GM12878 (cell line): ENCODE measurements at regions of chr12 and their contacts with region 1.

Region 1: DNA sequence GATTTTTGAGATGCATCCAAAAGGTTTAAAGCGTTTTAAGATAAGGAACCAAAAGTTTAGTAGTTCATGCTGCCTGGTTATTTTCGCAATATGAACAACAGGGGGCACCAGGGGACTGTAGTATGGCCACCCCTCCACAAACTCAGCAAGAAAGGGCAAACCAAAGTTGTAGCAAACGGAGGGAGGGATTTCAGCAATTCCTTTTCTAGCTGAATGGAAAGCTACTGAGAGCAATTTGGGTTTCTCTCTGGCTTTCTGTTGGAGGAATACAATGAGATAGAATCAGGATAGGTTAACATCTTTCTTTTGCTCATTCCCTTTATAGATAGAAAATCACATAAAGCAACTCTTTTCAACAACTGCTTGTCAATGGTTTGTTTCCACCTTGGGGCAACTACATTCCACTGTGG is 62.5 kb downstream of the DRAM1 start:
- DNase-seq: no peak
- ATAC-seq: peak; percentile 32
- H3K4me3 ChIP-seq: no peak overlapping the region
- H3K27ac ChIP-seq: peak overlapping the region; percentile 62
- H3K4me1 ChIP-seq: peaks cover 73% of the 10 kb centered on the region
- H3K27me3 ChIP-seq: no peaks in the 10 kb centered on the region
- CTCF ChIP-seq: peak; percentile 69 to 80 (median 70)
- EP300 ChIP-seq: no peak
- POLR2A ChIP-seq: no peak
- RAD21 ChIP-seq: peak; percentile 97

Region 2: GRCh38 chr12:101839324-101840283 is 100.3 kb before region 1 on chr12:
- CTCF ChIA-PET with region 1: interaction called, 10 read pairs
- POLR2A ChIA-PET with region 1: no interaction called
- RAD21 ChIA-PET with region 1: interaction called, 3 read pairs
- SMC1A ChIA-PET with region 1: no interaction called
- in situ Hi-C with region 1: no loop called
- intact Hi-C with region 1: no loop called
- DNase-seq: no peak
- ATAC-seq: peak; percentile 84
- H3K4me3 ChIP-seq: no peak overlapping the region
- H3K27ac ChIP-seq: peak overlapping the region; percentile 54
- H3K4me1 ChIP-seq: peaks cover 15% of the 10 kb centered on the region
- H3K27me3 ChIP-seq: no peaks in the 10 kb centered on the region
- CTCF ChIP-seq: peak; percentile 76 to 86 (median 80)
- EP300 ChIP-seq: no peak
- POLR2A ChIP-seq: no peak
- RAD21 ChIP-seq: peak; percentile 78

Region 3: GRCh38 chr12:101967506-101967905 is 27.6 kb after region 1 on chr12:
- CTCF ChIA-PET with region 1: interaction called, 16 read pairs
- POLR2A ChIA-PET with region 1: no interaction called
- RAD21 ChIA-PET with region 1: interaction called, 6 read pairs
- SMC1A ChIA-PET with region 1: interaction called, 5 read pairs
- in situ Hi-C with region 1: no loop called
- intact Hi-C with region 1: no loop called
- DNase-seq: peak; percentile 8
- ATAC-seq: peak; percentile 54
- H3K4me3 ChIP-seq: no peak overlapping the region
- H3K27ac ChIP-seq: peak overlapping the region; percentile 46; the same call in 1 of the 2 replicates
- H3K4me1 ChIP-seq: peaks cover 8% of the 10 kb centered on the region; the same call in 1 of the 2 replicates
- H3K27me3 ChIP-seq: no peaks in the 10 kb centered on the region
- CTCF ChIP-seq: no peak
- EP300 ChIP-seq: no peak
- POLR2A ChIP-seq: no peak
- RAD21 ChIP-seq: no peak

Region 4: GRCh38 chr12:102095675-102096263 is 155.9 kb after region 1 on chr12:
- CTCF ChIA-PET with region 1: interaction called, 15 read pairs
- POLR2A ChIA-PET with region 1: no interaction called
- RAD21 ChIA-PET with region 1: interaction called, 26 read pairs
- SMC1A ChIA-PET with region 1: interaction called, 12 read pairs
- in situ Hi-C with region 1: no loop called
- intact Hi-C with region 1: no loop called
- DNase-seq: peak; percentile 4
- ATAC-seq: peak; percentile 92
- H3K4me3 ChIP-seq: no peak overlapping the region
- H3K27ac ChIP-seq: no peak overlapping the region
- H3K4me1 ChIP-seq: peaks cover 10% of the 10 kb centered on the region
- H3K27me3 ChIP-seq: no peaks in the 10 kb centered on the region
- CTCF ChIP-seq: peak; percentile 48 to 67 (median 51); a peak in 4 of 6 replicates
- EP300 ChIP-seq: no peak
- POLR2A ChIP-seq: no peak
- RAD21 ChIP-seq: peak; percentile 69

Region 5: DNA sequence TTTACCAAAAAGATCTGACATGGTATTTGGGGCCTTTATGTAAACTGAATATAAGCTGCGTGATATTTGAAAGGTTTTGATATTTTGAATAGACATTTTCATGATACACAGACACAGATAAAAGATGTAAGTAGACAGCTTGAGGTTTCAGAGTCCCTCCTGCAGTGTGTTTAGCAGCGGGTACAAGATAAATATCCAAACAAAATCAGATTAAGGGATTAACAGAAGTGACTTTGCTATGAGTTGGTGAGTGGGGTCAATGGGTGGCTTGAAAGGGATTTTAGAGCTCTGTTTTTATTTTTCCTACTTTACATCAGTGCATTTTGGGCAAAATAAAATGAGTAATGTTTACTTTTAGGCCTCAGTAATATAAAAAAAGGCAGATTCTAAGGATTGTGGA is 456.4 kb after region 1 on chr12:
- CTCF ChIA-PET with region 1: no interaction called
- POLR2A ChIA-PET with region 1: no interaction called
- RAD21 ChIA-PET with region 1: no interaction called
- SMC1A ChIA-PET with region 1: no interaction called
- in situ Hi-C with region 1: no loop called
- intact Hi-C with region 1: no loop called
- DNase-seq: no peak
- ATAC-seq: no peak
- H3K4me3 ChIP-seq: no peak overlapping the region
- H3K27ac ChIP-seq: no peak overlapping the region
- H3K4me1 ChIP-seq: no peaks in the 10 kb centered on the region
- H3K27me3 ChIP-seq: no peaks in the 10 kb centered on the region
- CTCF ChIP-seq: no peak
- EP300 ChIP-seq: no peak
- POLR2A ChIP-seq: no peak
- RAD21 ChIP-seq: no peak

Region 6: GRCh38 chr12:102479099-102479887 is 539.4 kb after region 1 on chr12:
- CTCF ChIA-PET with region 1: interaction called, 33 read pairs
- POLR2A ChIA-PET with region 1: interaction called, 3 read pairs
- RAD21 ChIA-PET with region 1: interaction called, 13 read pairs
- SMC1A ChIA-PET with region 1: interaction called, 10 read pairs
- in situ Hi-C with region 1: no loop called
- intact Hi-C with region 1: loop called (anchors 2 kb)
- DNase-seq: peak; percentile 62
- ATAC-seq: peak; percentile 54
- H3K4me3 ChIP-seq: peak overlapping the region; percentile 59
- H3K27ac ChIP-seq: peak overlapping the region; percentile 78
- H3K4me1 ChIP-seq: peaks cover 53% of the 10 kb centered on the region
- H3K27me3 ChIP-seq: no peaks in the 10 kb centered on the region
- CTCF ChIP-seq: no peak
- EP300 ChIP-seq: no peak
- POLR2A ChIP-seq: no peak
- RAD21 ChIP-seq: no peak

Region 7: GRCh38 chr12:102702447-102703114 is 762.7 kb after region 1 on chr12:
- CTCF ChIA-PET with region 1: interaction called, 6 read pairs
- POLR2A ChIA-PET with region 1: no interaction called
- RAD21 ChIA-PET with region 1: interaction called, 7 read pairs
- SMC1A ChIA-PET with region 1: interaction called, 3 read pairs
- in situ Hi-C with region 1: no loop called
- intact Hi-C with region 1: loop called (anchors 5 kb)
- DNase-seq: no peak
- ATAC-seq: peak; percentile 78
- H3K4me3 ChIP-seq: no peak overlapping the region
- H3K27ac ChIP-seq: no peak overlapping the region
- H3K4me1 ChIP-seq: no peaks in the 10 kb centered on the region
- H3K27me3 ChIP-seq: no peaks in the 10 kb centered on the region
- CTCF ChIP-seq: peak; percentile 40 to 54 (median 49)
- EP300 ChIP-seq: no peak
- POLR2A ChIP-seq: no peak
- RAD21 ChIP-seq: peak; percentile 61

Region 8: DNA sequence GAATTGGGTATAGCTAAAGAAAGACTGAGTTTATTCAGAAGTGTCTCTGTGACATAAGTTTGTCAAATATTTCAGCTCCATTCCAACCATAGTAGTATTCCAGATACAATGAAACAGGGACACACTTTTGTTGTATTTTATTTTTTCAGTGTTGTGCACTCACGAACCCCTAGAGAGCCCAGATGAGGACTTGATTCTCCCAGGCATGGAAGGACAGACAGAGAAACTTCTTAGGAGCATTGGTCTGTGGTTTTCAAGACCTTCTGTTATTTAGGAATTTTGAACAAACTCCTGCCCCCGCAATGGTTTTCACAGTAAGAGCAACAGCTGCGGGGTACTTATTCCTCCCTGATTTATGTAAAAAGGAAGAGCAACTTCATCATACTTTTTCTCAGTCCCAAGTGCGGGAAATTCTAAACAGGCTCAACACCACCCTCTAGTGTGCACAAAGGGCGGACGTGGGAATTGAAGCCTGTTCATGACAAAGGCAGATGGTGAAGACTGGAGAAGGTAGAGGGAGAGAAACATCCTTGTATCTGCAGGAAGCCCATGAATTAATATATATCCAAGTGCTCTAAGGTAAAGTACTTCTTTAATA is 829.6 kb after region 1 on chr12:
- CTCF ChIA-PET with region 1: interaction called, 4 read pairs
- POLR2A ChIA-PET with region 1: no interaction called
- RAD21 ChIA-PET with region 1: interaction called, 8 read pairs
- SMC1A ChIA-PET with region 1: interaction called, 12 read pairs
- in situ Hi-C with region 1: no loop called
- intact Hi-C with region 1: loop called (anchors 5 kb)
- DNase-seq: peak; percentile 40
- ATAC-seq: peak; percentile 96
- H3K4me3 ChIP-seq: no peak overlapping the region
- H3K27ac ChIP-seq: no peak overlapping the region
- H3K4me1 ChIP-seq: no peaks in the 10 kb centered on the region
- H3K27me3 ChIP-seq: no peaks in the 10 kb centered on the region
- CTCF ChIP-seq: peak; percentile 80 to 87 (median 82)
- EP300 ChIP-seq: no peak
- POLR2A ChIP-seq: no peak
- RAD21 ChIP-seq: peak; percentile 96